ENCODE measurements at regions of chr16 and their contacts with region 1.

Region 1: GRCh38 chr16:70251629-70252354 is at the start of gene EXOSC6:
- H3K4me3 ChIP-seq: peak within 1 kb of the TSS; percentile 58
- H3K27ac ChIP-seq: peak within 1 kb of the TSS; percentile 95
- H3K4me1 ChIP-seq: no peaks in the 10 kb centered on the region
- CTCF ChIP-seq: peak; percentile 98

Region 2: DNA sequence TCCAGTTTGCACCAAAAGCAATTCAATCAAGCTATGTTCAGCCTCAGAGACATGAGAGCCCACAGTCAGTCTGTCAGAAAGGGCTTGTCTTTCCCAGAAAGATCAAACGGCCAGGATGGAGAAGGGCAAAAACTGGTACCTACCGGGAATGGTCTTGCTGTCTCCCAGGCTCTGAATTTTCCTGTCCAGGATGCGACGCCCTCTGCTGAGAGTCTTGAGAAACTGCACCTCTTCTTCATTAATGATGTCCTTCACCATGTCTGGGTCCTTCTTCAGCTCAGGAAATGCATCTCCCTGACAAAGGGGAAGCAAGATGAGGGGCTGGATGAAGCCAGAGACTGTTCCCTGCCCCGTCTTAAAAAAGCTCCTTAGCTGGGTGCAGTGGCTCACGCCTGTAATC is 15.7 kb after region 1 on chr16:
- CTCF ChIA-PET with region 1: interaction called, 24 read pairs
- POLR2A ChIA-PET with region 1: interaction called, 4 read pairs
- H3K4me3 ChIP-seq: no peak overlapping the region
- H3K27ac ChIP-seq: no peak overlapping the region
- H3K4me1 ChIP-seq: no peaks in the 10 kb centered on the region
- CTCF ChIP-seq: no peak

Region 3: DNA sequence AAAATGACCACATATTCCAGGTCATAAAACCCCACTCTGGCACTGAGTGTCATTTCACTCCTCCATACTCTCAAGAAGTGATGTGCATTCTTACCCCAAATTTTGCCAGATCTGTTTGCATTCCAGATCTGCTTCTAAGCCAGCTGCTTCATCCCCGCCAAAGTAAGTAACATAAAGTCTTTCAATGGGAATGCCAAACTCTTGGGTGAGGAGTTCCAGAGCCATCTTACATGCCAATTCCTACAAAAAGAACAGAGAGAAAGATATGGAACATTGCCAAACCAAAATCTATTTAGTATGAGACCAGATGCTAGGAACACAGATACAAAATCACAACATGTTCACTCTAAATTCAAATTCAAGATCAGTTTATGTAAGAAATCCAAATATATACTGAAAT is 24.6 kb after region 1 on chr16:
- CTCF ChIA-PET with region 1: interaction called, 16 read pairs
- POLR2A ChIA-PET with region 1: no interaction called
- H3K4me3 ChIP-seq: no peak overlapping the region
- H3K27ac ChIP-seq: no peak overlapping the region
- H3K4me1 ChIP-seq: no peaks in the 10 kb centered on the region
- CTCF ChIP-seq: no peak

Region 4: GRCh38 chr16:70395345-70395901 is 143.6 kb after region 1 on chr16:
- CTCF ChIA-PET with region 1: no interaction called
- POLR2A ChIA-PET with region 1: no interaction called
- H3K4me3 ChIP-seq: no peak overlapping the region
- H3K27ac ChIP-seq: no peak overlapping the region
- H3K4me1 ChIP-seq: no peaks in the 10 kb centered on the region
- CTCF ChIP-seq: peak; percentile 57; the same call in 1 of the 2 replicates